ENCODE measurements at regions of chr20 and their contacts with region 1.

Region 1: DNA sequence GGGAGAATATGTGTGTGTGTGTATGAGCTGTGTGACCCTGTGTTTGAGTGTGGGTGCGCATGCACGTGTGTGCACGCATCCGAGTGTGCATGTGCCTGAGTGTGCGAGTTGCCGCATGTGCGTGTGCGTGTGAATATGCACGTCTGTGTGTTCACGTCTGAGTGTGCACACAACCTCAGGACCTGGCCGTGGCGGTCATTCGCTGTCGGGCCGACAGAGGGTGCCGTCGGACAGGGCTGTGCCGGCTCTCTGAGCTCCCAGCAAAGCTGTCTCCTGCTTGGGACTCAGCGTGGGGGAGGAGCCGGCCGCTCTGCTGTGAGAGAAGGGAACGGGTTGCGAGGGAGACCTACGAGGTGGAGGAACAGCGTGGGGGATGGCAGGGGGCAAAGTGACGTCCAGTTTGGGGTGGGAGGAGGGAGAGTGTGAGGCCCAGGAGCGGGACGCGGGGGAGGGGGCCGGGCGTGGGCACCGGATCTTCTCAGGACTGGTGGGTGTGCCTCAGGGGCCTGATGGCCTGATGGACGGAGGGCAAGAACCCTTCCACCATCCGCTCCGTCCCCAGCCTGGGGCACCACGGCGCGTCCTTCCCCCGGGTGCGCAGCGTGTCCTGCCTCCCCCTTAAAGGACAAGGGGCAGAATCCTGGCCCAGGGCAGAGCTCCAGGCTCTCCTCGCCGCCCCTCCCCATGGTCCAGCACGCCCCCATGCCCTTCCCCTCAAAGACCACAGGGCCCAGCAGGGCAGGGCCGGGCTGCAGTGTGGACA is 19.9 kb downstream of the SLC17A9 start:
- DNase-seq: peak; percentile 90
- ATAC-seq: peak; percentile 98
- H3K4me3 Mint-ChIP-seq: no peak overlapping the region
- H3K27ac Mint-ChIP-seq: no peak overlapping the region
- H3K4me1 Mint-ChIP-seq: peaks cover 14% of the 10 kb centered on the region
- H3K27me3 Mint-ChIP-seq: peaks cover 50% of the 10 kb centered on the region

Region 2: GRCh38 chr20:62900052-62900691 is 72.3 kb before region 1 on chr20:
- CTCF ChIA-PET with region 1: interaction called, 10 read pairs
- DNase-seq: peak; percentile 88
- ATAC-seq: peak; percentile 93
- H3K4me3 Mint-ChIP-seq: peak overlapping the region; percentile 41
- H3K27ac Mint-ChIP-seq: peak overlapping the region; percentile 70
- H3K4me1 Mint-ChIP-seq: peaks cover 52% of the 10 kb centered on the region
- H3K27me3 Mint-ChIP-seq: no peaks in the 10 kb centered on the region

Region 3: GRCh38 chr20:62937366-62938104 is 34.9 kb before region 1 on chr20:
- CTCF ChIA-PET with region 1: no interaction called
- DNase-seq: peak; percentile 98
- ATAC-seq: peak; percentile 88
- H3K4me3 Mint-ChIP-seq: no peak overlapping the region
- H3K27ac Mint-ChIP-seq: peak overlapping the region; percentile 95
- H3K4me1 Mint-ChIP-seq: peaks cover 44% of the 10 kb centered on the region
- H3K27me3 Mint-ChIP-seq: no peaks in the 10 kb centered on the region

Region 4: GRCh38 chr20:62953839-62954703 is 18.4 kb before region 1 on chr20:
- CTCF ChIA-PET with region 1: interaction called, 18 read pairs
- DNase-seq: peak; percentile 90
- ATAC-seq: peak; percentile 81
- H3K4me3 Mint-ChIP-seq: peak overlapping the region; percentile 75
- H3K27ac Mint-ChIP-seq: peak overlapping the region; percentile 89
- H3K4me1 Mint-ChIP-seq: peaks cover 22% of the 10 kb centered on the region
- H3K27me3 Mint-ChIP-seq: no peaks in the 10 kb centered on the region

Region 5: GRCh38 chr20:63002511-63002910 is 30.1 kb after region 1 on chr20:
- CTCF ChIA-PET with region 1: interaction called, 27 read pairs
- DNase-seq: no peak
- ATAC-seq: no peak
- H3K4me3 Mint-ChIP-seq: no peak overlapping the region
- H3K27ac Mint-ChIP-seq: no peak overlapping the region
- H3K4me1 Mint-ChIP-seq: peaks cover 15% of the 10 kb centered on the region
- H3K27me3 Mint-ChIP-seq: peaks cover 74% of the 10 kb centered on the region

Region 6: DNA sequence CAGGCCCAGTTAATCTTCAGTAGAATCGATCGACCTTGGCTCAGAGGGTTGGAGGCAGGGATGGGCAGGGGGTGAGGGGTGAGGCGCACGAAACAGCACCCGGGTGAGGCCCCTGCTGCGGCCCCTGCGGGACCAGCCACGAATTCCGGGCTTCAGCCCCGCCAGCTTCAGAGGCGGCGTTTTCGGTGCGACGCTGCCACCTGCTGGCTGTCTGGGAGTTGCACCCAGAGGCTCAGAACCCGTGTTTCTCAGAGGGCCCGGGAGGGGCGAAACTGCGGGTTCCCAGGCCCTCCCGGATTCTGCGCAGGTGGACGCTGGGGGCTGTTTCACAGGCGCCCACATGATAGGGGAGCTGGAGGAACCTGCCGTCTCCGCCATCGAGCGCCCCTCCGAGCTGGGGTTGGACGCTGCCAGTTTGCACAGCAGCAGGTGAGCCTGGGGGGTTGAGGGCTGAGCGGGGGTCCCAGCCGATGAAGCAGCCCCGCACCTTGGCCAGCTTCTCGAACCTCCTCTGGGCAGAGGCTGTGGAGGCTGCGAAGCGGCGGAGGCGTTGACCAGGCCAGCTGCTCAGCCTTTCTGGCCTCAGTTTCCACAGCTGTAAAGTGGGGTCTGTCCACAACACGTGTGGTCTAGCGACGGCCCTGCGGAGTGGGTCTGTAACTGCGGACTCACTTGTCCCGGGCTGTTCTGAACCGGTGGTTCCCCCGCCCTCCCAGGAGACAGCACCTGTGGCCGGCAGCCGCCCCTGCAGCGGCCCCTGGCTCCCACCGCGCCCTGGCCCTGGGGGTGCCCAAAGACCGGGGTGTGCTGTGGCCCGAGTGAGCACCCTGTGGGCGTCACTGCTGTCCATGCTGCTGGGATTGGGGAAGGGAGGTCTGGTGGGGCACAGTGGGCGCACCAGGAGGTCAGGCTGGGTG is 36.9 kb after region 1 on chr20:
- CTCF ChIA-PET with region 1: interaction called, 27 read pairs
- DNase-seq: peak; percentile 86
- ATAC-seq: peak; percentile 82
- H3K4me3 Mint-ChIP-seq: no peak overlapping the region
- H3K27ac Mint-ChIP-seq: no peak overlapping the region
- H3K4me1 Mint-ChIP-seq: peaks cover 22% of the 10 kb centered on the region
- H3K27me3 Mint-ChIP-seq: peaks cover 72% of the 10 kb centered on the region